HCT116 (cell line): ENCODE measurements at regions of chr1 and their contacts with region 1.

Region 1: GRCh38 chr1:108828022-108828961 is 28.6 kb downstream of the AKNAD1 start:
- DNase-seq: peak; percentile 73
- ATAC-seq: peak; percentile 73
- H3K4me3 ChIP-seq: no peak overlapping the region
- H3K27ac ChIP-seq: no peak overlapping the region
- H3K4me1 ChIP-seq: peaks cover 20 to 45% of the 10 kb centered on the region in 2 experiments
- H3K27me3 ChIP-seq: no peaks in the 10 kb centered on the region
- CTCF ChIP-seq: peak; percentile 67 to 77 (median 76)
- POLR2A ChIP-seq: no peak
- RAD21 ChIP-seq: peak; percentile 82

Region 2: DNA sequence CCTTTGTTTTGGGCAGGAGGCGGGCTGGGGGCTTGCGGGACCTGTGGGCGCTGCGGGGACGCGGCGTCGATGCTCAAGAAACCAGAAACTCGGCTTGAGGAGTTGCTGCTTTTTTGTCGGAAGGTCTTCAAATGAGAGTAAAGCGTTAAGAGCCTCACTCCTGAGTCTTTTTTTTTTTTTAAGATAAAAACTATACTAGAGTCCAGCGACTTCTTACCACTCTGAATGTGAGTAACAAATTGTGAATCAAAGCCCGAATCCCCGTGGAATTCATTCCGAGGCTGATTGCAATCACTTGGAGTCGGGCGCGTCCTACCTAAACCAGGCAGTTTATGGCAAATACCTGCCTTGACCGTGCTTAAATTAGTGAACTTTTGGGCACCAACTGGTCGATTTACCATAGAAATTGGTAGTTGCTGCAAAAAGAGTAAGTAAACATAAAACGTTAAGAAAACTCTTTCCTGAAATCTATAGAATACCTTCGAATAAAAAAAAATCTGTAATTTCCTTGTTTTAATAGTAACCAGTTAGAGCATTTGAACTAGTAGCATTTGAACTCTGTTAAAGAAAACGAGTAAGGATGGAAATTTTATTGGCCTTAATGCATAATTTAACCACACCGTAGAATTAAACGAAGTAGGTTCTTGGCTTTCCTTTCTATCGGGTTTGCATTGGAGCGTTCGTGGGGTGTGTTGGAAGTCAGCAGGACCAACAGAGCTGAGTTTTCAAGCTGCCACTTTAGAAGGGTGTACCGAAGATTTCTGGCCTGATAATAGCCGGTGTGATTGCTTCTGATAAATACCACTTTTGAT is 49.3 kb after region 1 on chr1:
- CTCF ChIA-PET with region 1: no interaction called
- POLR2A ChIA-PET with region 1: no interaction called
- RAD21 ChIA-PET with region 1: no interaction called
- intact Hi-C with region 1: loop called (anchors 5 kb)
- DNase-seq: no peak
- ATAC-seq: no peak
- H3K4me3 ChIP-seq: peak overlapping the region; percentile 80 to 87
- H3K27ac ChIP-seq: peak overlapping the region; percentile 41; the same call in 1 of the 2 replicates
- H3K4me1 ChIP-seq: peaks cover 0 to 27% of the 10 kb centered on the region in 2 experiments; a peak in 2 of 4 replicates
- H3K27me3 ChIP-seq: no peaks in the 10 kb centered on the region
- CTCF ChIP-seq: no peak
- POLR2A ChIP-seq: no peak
- RAD21 ChIP-seq: no peak

Region 3: GRCh38 chr1:108897865-108898720 is 69.8 kb after region 1 on chr1:
- CTCF ChIA-PET with region 1: interaction called, 93 read pairs
- POLR2A ChIA-PET with region 1: no interaction called
- RAD21 ChIA-PET with region 1: interaction called in 1 of 2 experiments, 3 read pairs
- intact Hi-C with region 1: loop called (anchors 1 kb)
- DNase-seq: peak; percentile 40
- ATAC-seq: peak; percentile 81
- H3K4me3 ChIP-seq: no peak overlapping the region
- H3K27ac ChIP-seq: no peak overlapping the region
- H3K4me1 ChIP-seq: no peaks in the 10 kb centered on the region
- H3K27me3 ChIP-seq: no peaks in the 10 kb centered on the region
- CTCF ChIP-seq: peak; percentile 54 to 79 (median 71)
- POLR2A ChIP-seq: no peak
- RAD21 ChIP-seq: peak; percentile 78

Region 4: GRCh38 chr1:109112652-109113285 is 284.5 kb after region 1 on chr1:
- CTCF ChIA-PET with region 1: interaction called, 17 read pairs
- POLR2A ChIA-PET with region 1: no interaction called
- RAD21 ChIA-PET with region 1: no interaction called
- intact Hi-C with region 1: loop called (anchors 1 kb)
- DNase-seq: peak; percentile 80
- ATAC-seq: peak; percentile 97
- H3K4me3 ChIP-seq: no peak overlapping the region
- H3K27ac ChIP-seq: no peak overlapping the region
- H3K4me1 ChIP-seq: peaks cover 3 to 16% of the 10 kb centered on the region in 2 experiments; a peak in 3 of 4 replicates
- H3K27me3 ChIP-seq: no peaks in the 10 kb centered on the region
- CTCF ChIP-seq: peak; percentile 79 to 96 (median 96)
- POLR2A ChIP-seq: no peak
- RAD21 ChIP-seq: peak; percentile 82

Region 5: GRCh38 chr1:109263597-109264398 is 435.5 kb after region 1 on chr1:
- CTCF ChIA-PET with region 1: no interaction called
- POLR2A ChIA-PET with region 1: no interaction called
- RAD21 ChIA-PET with region 1: no interaction called
- intact Hi-C with region 1: loop called (anchors 2 kb)
- DNase-seq: peak; percentile 88
- ATAC-seq: peak; percentile 96
- H3K4me3 ChIP-seq: no peak overlapping the region
- H3K27ac ChIP-seq: peak overlapping the region; percentile 2; the same call in 1 of the 2 replicates
- H3K4me1 ChIP-seq: peaks cover 0 to 9% of the 10 kb centered on the region in 2 experiments; a peak in 2 of 4 replicates
- H3K27me3 ChIP-seq: no peaks in the 10 kb centered on the region
- CTCF ChIP-seq: peak; percentile 99 to 100 (median 99)
- POLR2A ChIP-seq: no peak
- RAD21 ChIP-seq: peak; percentile 96